Prostate gland (tissue), 2 donors: ENCODE measurements at regions of chr7 and their contacts with region 1.

Region 1: GRCh38 chr7:992709-993607 is 10.0 kb downstream of the CYP2W1 start:
- DNase-seq: peak; percentile 94
- H3K4me3 ChIP-seq: no peak overlapping the region
- H3K27ac ChIP-seq: no peak overlapping the region
- H3K4me1 ChIP-seq: no peaks in the 10 kb centered on the region
- H3K27me3 ChIP-seq: no peaks in the 10 kb centered on the region
- CTCF ChIP-seq: peak; percentile 100
- POLR2A ChIP-seq: peak; percentile 21

Region 2: GRCh38 chr7:1065263-1066260 is 72.6 kb after region 1 on chr7:
- intact Hi-C with region 1: loop called (anchors 1 kb)
- DNase-seq: peak; percentile 78
- H3K4me3 ChIP-seq: no peak overlapping the region
- H3K27ac ChIP-seq: no peak overlapping the region
- H3K4me1 ChIP-seq: no peaks in the 10 kb centered on the region
- H3K27me3 ChIP-seq: no peaks in the 10 kb centered on the region
- CTCF ChIP-seq: peak; percentile 80 to 98 (median 94)
- POLR2A ChIP-seq: no peak

Region 3: DNA sequence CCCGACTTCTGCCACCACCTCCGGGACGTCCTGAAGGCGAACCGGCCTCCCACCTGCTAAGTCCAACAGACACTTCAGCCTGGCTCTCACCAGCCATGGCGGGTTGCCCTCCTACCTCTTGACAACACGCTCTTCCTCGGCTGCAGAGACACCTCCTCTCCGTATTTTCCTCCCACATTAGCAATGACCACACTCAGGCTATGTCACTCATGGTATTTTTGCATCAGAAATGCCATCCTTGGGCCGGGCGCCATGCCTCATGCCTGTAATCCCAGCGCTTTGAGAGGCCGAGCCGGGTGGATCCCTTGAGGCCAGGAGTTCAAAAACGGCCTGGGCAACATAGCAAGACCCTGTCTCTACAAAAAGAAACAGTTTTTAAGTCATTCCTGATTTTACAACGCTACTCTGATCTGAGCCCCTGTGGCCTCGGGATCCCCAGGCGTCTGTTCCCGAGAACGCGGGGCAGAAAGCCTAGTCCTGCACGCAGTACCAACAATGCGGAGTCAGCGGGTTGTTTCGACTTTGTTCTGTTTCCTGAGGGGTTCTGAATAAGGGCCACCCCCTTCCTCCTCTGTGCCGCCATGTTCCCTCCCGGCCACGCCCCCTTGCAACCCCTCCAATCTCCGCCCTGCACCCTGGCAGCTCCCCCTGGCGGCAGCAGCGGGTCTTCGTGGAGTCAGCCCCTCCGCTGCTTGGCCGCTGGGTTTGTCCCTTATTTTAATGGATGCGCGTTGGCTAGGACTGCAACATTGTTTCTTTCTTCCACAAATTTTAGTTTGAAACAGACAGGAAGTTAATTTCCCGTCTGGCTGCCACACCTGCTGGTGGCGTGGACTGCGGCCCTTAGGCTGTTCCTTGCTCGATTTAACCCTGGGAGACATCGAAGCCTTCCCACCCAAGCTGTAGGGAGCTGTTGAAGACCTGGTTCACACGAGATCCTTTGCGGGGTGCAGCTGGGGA is 176.7 kb after region 1 on chr7:
- intact Hi-C with region 1: loop called (anchors 5 kb)
- DNase-seq: peak; percentile 51
- H3K4me3 ChIP-seq: peak overlapping the region; percentile 22 to 23
- H3K27ac ChIP-seq: no peak overlapping the region
- H3K4me1 ChIP-seq: no peaks in the 10 kb centered on the region
- H3K27me3 ChIP-seq: no peaks in the 10 kb centered on the region
- CTCF ChIP-seq: peak in 3 of 4 experiments; percentile 56 to 69 (median 67)
- POLR2A ChIP-seq: no peak